ENCODE measurements at regions of chr7 and their contacts with region 1.

Region 1: DNA sequence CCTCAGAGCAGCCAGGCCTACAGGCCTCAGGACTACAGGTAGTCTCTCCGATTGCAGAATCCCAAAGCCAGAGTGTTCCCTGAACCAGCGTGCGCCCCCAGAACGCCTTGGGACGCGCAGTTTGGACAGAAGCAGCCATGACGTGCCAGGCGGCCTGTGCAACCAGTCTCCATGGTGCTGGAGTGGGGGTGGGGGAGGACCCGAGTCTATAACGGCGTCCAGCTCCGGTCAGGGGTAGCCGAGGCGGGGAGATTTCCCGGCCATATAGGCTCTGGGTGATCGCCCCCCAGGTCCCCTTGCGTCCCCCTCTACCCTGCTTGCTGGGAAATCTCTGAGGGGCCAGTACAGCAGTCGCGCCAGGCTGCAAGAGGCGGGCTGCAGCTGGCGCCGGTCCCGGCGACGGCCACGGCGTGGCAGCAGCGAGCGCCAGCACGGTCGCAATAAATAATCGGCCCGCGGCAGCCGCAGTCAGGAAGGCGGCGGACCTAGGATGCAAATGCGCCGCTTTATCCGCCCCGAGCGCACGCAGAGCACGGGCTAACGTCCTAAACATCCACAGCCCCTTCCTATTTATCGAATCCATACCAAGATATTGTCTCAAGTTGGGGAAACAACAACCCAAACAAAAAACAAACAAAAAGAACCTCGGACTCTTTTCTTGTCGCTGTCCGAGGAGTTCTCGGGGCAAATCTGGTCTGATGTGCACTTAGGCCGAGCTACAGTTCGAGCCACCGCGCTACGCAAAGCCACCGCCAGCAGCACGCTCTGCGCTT is 1.6 kb downstream of the HOXA3 start:
- DNase-seq: peak; percentile 47 to 76 (median 57)
- H3K4me3 ChIP-seq: peak overlapping the region; percentile 66
- H3K4me3 Mint-ChIP-seq: peak overlapping the region; percentile 68 to 88 (median 80)
- H3K27ac ChIP-seq: no peak overlapping the region
- H3K27ac Mint-ChIP-seq: peak overlapping the region in 5 of 8 donors; percentile 22 to 82 (median 67)
- H3K4me1 ChIP-seq: peaks cover 38% of the 10 kb centered on the region
- H3K4me1 Mint-ChIP-seq: peaks cover 37 to 57% (median 44%) of the 10 kb centered on the region in 3 donors
- H3K27me3 ChIP-seq: peaks cover 90% of the 10 kb centered on the region
- H3K27me3 Mint-ChIP-seq: peaks cover 86 to 92% of the 10 kb centered on the region in 2 donors

Region 2: GRCh38 chr7:27130540-27131389 is 20.0 kb before region 1 on chr7 and contains the start of gene HOXA4:
- CTCF ChIA-PET with region 1: interaction called, 11 read pairs
- POLR2A ChIA-PET with region 1: no interaction called
- DNase-seq: peak; percentile 70 to 82 (median 71)
- H3K4me3 ChIP-seq: peak within 1 kb of the TSS; percentile 76
- H3K4me3 Mint-ChIP-seq: peak within 1 kb of the TSS; percentile 68 to 89 (median 77)
- H3K27ac ChIP-seq: no peak within 1 kb of the TSS
- H3K27ac Mint-ChIP-seq: peak within 1 kb of the TSS in 5 of 8 donors; percentile 25 to 57 (median 38)
- H3K4me1 ChIP-seq: peaks cover 6% of the 10 kb centered on the region
- H3K4me1 Mint-ChIP-seq: peaks cover 0 to 3% (median 0%) of the 10 kb centered on the region in 3 donors
- H3K27me3 ChIP-seq: peaks cover 6% of the 10 kb centered on the region
- H3K27me3 Mint-ChIP-seq: peaks cover 43 to 82% of the 10 kb centered on the region in 2 donors
- total RNA-seq, gene HOXA4: 0.11 TPM in 1 of 2 experiments, not detected in the other

Region 3: GRCh38 chr7:27329911-27330310 is 179.2 kb after region 1 on chr7:
- CTCF ChIA-PET with region 1: no interaction called
- POLR2A ChIA-PET with region 1: no interaction called
- DNase-seq: no peak
- H3K4me3 ChIP-seq: no peak overlapping the region
- H3K4me3 Mint-ChIP-seq: no peak overlapping the region
- H3K27ac ChIP-seq: no peak overlapping the region
- H3K27ac Mint-ChIP-seq: no peak overlapping the region
- H3K4me1 ChIP-seq: no peaks in the 10 kb centered on the region
- H3K4me1 Mint-ChIP-seq: no peaks in the 10 kb centered on the region
- H3K27me3 ChIP-seq: no peaks in the 10 kb centered on the region
- H3K27me3 Mint-ChIP-seq: peaks cover 1 to 10% of the 10 kb centered on the region in 2 donors

Region 4: GRCh38 chr7:27423272-27423671 is 272.5 kb after region 1 on chr7:
- CTCF ChIA-PET with region 1: no interaction called
- POLR2A ChIA-PET with region 1: no interaction called
- DNase-seq: no peak
- H3K4me3 ChIP-seq: no peak overlapping the region
- H3K4me3 Mint-ChIP-seq: no peak overlapping the region
- H3K27ac ChIP-seq: no peak overlapping the region
- H3K27ac Mint-ChIP-seq: no peak overlapping the region
- H3K4me1 ChIP-seq: no peaks in the 10 kb centered on the region
- H3K4me1 Mint-ChIP-seq: no peaks in the 10 kb centered on the region
- H3K27me3 ChIP-seq: no peaks in the 10 kb centered on the region
- H3K27me3 Mint-ChIP-seq: peaks cover 7 to 23% of the 10 kb centered on the region in 2 donors